ENCODE measurements at regions of chrX and their contacts with region 1.

Region 1: GRCh38 chrX:150772150-150772970 is 79.2 kb downstream of the MTMR1 start:
- DNase-seq: peak; percentile 69 to 94
- H3K4me3 ChIP-seq: no peak overlapping the region
- H3K4me1 ChIP-seq: no peaks in the 10 kb centered on the region
- H3K27me3 ChIP-seq: no peaks in the 10 kb centered on the region

Region 2: GRCh38 chrX:150990890-150991289 is 218.5 kb after region 1 on chrX:
- in situ Hi-C with region 1: loop called (anchors 10 kb)
- DNase-seq: no peak
- H3K4me3 ChIP-seq: no peak overlapping the region
- H3K4me1 ChIP-seq: no peaks in the 10 kb centered on the region
- H3K27me3 ChIP-seq: no peaks in the 10 kb centered on the region

Region 3: GRCh38 chrX:151085207-151085606 is 312.8 kb after region 1 on chrX:
- in situ Hi-C with region 1: loop called (anchors 5 kb)
- DNase-seq: no peak
- H3K4me3 ChIP-seq: no peak overlapping the region
- H3K4me1 ChIP-seq: peaks cover 6% of the 10 kb centered on the region
- H3K27me3 ChIP-seq: peaks cover 28% of the 10 kb centered on the region

Region 4: GRCh38 chrX:151680805-151681204 is 908.4 kb after region 1 on chrX:
- in situ Hi-C with region 1: loop called (anchors 25 kb)
- DNase-seq: peak; percentile 17 to 87
- H3K4me3 ChIP-seq: no peak overlapping the region
- H3K4me1 ChIP-seq: no peaks in the 10 kb centered on the region
- H3K27me3 ChIP-seq: no peaks in the 10 kb centered on the region

Measured in HAP-1 (cell line).